ENCODE measurements at regions of chr21 and their contacts with region 1.

Region 1: DNA sequence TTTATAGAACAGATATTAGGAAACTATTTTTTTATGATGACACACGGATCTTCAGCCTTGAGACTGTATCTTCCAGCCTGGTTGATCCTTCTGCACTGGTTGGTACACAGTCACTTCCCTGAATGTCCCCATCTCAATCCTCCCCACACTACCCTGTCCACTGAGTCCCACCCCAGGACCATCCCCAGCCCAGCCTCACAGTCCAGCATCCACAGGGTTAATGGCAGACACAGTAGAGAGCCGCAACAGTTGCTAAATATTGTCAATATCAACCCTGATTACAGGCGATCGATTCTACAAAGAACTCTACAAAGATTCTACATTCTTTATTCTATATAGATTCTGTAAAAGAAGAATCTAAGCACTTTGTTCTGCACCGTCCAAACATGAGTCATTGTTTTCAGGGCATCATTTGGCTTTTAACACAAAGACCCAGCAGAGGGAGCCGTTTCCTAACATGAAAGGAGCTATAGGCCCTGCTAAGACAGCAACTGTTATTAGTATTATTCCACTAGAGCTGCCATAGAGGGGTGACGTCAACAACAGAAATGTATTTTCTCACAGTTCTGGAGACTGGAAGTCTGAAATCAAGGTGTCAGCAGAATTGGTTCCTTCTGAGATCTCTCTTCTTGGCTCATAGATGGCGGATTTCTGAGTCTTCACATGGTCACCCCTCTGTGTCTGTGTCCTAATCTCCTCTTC is 30.1 kb upstream of the IFNAR2 start:
- DNase-seq: peak; percentile 34
- H3K4me3 ChIP-seq: no peak overlapping the region
- H3K27ac ChIP-seq: peak overlapping the region; percentile 88
- H3K4me1 ChIP-seq: peaks cover 46% of the 10 kb centered on the region
- H3K27me3 ChIP-seq: no peaks in the 10 kb centered on the region
- CTCF ChIP-seq: peak; percentile 91

Region 2: DNA sequence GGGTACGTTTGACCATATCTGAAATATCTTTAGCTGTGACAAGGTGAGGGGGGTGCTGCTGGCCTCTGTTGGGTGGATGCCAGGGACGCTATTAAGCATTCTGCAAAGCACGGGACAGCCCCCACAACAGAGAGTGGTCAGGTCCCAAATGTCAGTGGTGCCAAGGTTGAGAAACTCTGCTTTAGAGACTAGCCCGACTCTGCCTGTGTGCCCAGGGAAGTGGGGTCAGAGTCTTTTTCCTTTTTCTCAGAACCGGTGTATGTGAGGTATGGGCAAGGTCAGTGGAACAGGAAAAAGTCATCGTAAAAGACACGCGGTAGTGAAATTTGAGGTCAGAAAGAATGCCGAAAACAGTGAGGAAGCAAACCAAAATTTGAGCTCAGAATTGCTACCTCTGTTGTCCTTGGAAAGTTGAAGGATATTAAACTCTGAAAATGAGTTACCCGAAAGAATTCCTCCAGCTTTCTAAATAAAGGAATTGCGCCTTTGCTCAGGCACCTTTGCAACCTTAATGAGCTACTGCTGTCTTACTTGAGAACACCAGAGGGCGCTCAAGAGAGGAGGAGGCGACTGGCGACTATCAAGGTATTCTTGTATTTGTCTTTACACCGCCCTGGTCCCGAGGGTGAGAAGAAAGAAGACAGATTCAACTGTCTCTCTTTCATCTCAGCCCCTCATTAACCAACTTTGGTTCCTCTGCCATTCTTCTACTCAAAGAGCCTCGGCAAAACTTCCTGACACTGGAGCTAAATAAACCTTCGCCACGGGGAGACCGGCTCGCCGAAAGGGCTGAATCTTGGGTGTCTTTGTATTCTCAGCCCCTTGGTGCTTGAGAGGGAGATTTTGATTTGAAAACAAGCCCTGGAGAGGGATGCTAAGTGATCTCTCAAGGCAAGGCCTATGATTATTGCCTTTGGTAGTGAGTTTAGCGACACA is 259.3 kb before region 1 on chr21:
- intact Hi-C with region 1: loop called (anchors 10 kb)
- DNase-seq: no peak
- H3K4me3 ChIP-seq: no peak overlapping the region
- H3K27ac ChIP-seq: no peak overlapping the region
- H3K4me1 ChIP-seq: no peaks in the 10 kb centered on the region
- H3K27me3 ChIP-seq: peaks cover 8% of the 10 kb centered on the region
- CTCF ChIP-seq: peak; percentile 84

Region 3: GRCh38 chr21:33374450-33375096 is 174.9 kb after region 1 on chr21:
- intact Hi-C with region 1: loop called (anchors 5 kb)
- DNase-seq: peak; percentile 52
- H3K4me3 ChIP-seq: no peak overlapping the region
- H3K27ac ChIP-seq: peak overlapping the region; percentile 50
- H3K4me1 ChIP-seq: peaks cover 9% of the 10 kb centered on the region
- H3K27me3 ChIP-seq: no peaks in the 10 kb centered on the region
- CTCF ChIP-seq: peak; percentile 77

Region 4: DNA sequence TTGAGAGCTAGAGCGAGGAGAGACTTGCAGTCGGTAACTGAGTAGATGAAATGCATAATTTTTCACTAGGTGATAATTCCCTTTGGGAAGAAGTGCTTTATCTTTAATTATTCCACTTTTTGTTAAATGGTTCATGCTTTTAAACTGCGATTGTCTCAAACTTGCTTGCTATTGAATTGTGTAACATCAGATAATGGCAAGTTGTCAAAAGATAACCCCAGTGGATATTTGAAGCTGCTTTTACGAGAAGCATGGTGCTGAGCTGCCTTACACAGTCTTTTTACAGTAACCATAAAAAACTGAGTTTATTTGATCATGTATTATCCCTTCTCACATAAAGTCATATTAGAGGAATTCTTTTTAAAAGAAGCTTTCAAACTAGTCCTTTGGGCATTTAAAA is 249.9 kb after region 1 on chr21:
- intact Hi-C with region 1: loop called (anchors 5 kb)
- DNase-seq: no peak
- H3K4me3 ChIP-seq: no peak overlapping the region
- H3K27ac ChIP-seq: no peak overlapping the region
- H3K4me1 ChIP-seq: peaks cover 19% of the 10 kb centered on the region
- H3K27me3 ChIP-seq: no peaks in the 10 kb centered on the region
- CTCF ChIP-seq: no peak